GM12878 (cell line): ENCODE measurements at regions of chr5 and their contacts with region 1.

Region 1: GRCh38 chr5:159198063-159199036 is 11.0 kb downstream of the RNF145 start:
- DNase-seq: peak; percentile 56
- ATAC-seq: peak; percentile 92
- H3K4me3 ChIP-seq: peak overlapping the region; percentile 31; the same call in 1 of the 2 replicates
- H3K27ac ChIP-seq: peak overlapping the region; percentile 63
- H3K4me1 ChIP-seq: peaks cover 24% of the 10 kb centered on the region
- H3K27me3 ChIP-seq: no peaks in the 10 kb centered on the region
- CTCF ChIP-seq: no peak
- EP300 ChIP-seq: no peak
- POLR2A ChIP-seq: no peak
- RAD21 ChIP-seq: no peak

Region 2: GRCh38 chr5:159135896-159136531 is 62.3 kb before region 1 on chr5:
- CTCF ChIA-PET with region 1: no interaction called
- POLR2A ChIA-PET with region 1: no interaction called
- RAD21 ChIA-PET with region 1: no interaction called
- SMC1A ChIA-PET with region 1: no interaction called
- in situ Hi-C with region 1: no loop called
- intact Hi-C with region 1: no loop called
- DNase-seq: no peak
- ATAC-seq: no peak
- H3K4me3 ChIP-seq: no peak overlapping the region
- H3K27ac ChIP-seq: no peak overlapping the region
- H3K4me1 ChIP-seq: no peaks in the 10 kb centered on the region
- H3K27me3 ChIP-seq: 0 out of 4 replicates have a peak, but pooled peaks cover 0 to 4% of the 10 kb centered on the region in 2 experiments
- CTCF ChIP-seq: no peak
- EP300 ChIP-seq: no peak
- POLR2A ChIP-seq: no peak
- RAD21 ChIP-seq: no peak

Region 3: DNA sequence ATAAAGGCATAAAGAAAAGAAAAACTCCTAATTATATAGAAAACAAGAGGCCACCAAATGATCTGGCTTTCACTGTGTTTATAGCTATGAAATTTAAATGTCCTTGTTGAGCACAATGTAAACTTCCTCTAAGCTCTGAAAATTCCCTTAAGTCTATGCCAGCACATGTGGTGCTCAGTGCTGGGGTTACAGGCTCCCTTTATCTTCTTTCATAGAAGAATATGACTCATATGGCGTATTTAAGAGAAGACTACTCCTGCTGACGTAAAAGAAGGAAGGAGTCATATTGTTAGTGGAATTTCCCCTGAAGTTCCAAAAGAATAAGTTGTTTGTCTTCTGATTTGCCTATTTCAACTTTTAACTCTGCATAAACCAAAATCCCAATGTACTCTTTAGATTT is 19.4 kb before region 1 on chr5:
- CTCF ChIA-PET with region 1: interaction called, 5 read pairs
- POLR2A ChIA-PET with region 1: interaction called, 11 read pairs
- RAD21 ChIA-PET with region 1: interaction called, 11 read pairs
- SMC1A ChIA-PET with region 1: interaction called, 21 read pairs
- in situ Hi-C with region 1: no loop called
- intact Hi-C with region 1: no loop called
- DNase-seq: peak; percentile 51
- ATAC-seq: peak; percentile 84
- H3K4me3 ChIP-seq: no peak overlapping the region
- H3K27ac ChIP-seq: peak overlapping the region; percentile 81
- H3K4me1 ChIP-seq: peaks cover 12% of the 10 kb centered on the region
- H3K27me3 ChIP-seq: no peaks in the 10 kb centered on the region
- CTCF ChIP-seq: no peak
- EP300 ChIP-seq: peak; percentile 74 to 87; a peak in 3 of 4 replicates
- POLR2A ChIP-seq: no peak
- RAD21 ChIP-seq: no peak

Region 4: GRCh38 chr5:159184858-159185381 is 13.4 kb before region 1 on chr5:
- CTCF ChIA-PET with region 1: interaction called, 13 read pairs
- POLR2A ChIA-PET with region 1: interaction called, 24 read pairs
- RAD21 ChIA-PET with region 1: interaction called, 11 read pairs
- SMC1A ChIA-PET with region 1: interaction called, 21 read pairs
- in situ Hi-C with region 1: no loop called
- intact Hi-C with region 1: no loop called
- DNase-seq: no peak
- ATAC-seq: peak; percentile 61
- H3K4me3 ChIP-seq: no peak overlapping the region
- H3K27ac ChIP-seq: peak overlapping the region; percentile 48
- H3K4me1 ChIP-seq: peaks cover 9% of the 10 kb centered on the region
- H3K27me3 ChIP-seq: no peaks in the 10 kb centered on the region
- CTCF ChIP-seq: no peak
- EP300 ChIP-seq: no peak
- POLR2A ChIP-seq: no peak
- RAD21 ChIP-seq: no peak